Activated CD8-positive, alpha-beta T cell treated with anti-CD3 and anti-CD28 coated beads for 36 hours (primary cell): ENCODE measurements at regions of chr12 and their contacts with region 1.

Region 1: GRCh38 chr12:31274520-31275300 is 51.2 kb downstream of the SINHCAF start:
- DNase-seq: no peak
- ATAC-seq: no peak
- H3K4me3 Mint-ChIP-seq: no peak overlapping the region
- H3K27ac Mint-ChIP-seq: peak overlapping the region; percentile 61
- H3K4me1 Mint-ChIP-seq: peaks cover 2% of the 10 kb centered on the region
- H3K27me3 Mint-ChIP-seq: no peaks in the 10 kb centered on the region
- CTCF ChIP-seq: no peak

Region 2: DNA sequence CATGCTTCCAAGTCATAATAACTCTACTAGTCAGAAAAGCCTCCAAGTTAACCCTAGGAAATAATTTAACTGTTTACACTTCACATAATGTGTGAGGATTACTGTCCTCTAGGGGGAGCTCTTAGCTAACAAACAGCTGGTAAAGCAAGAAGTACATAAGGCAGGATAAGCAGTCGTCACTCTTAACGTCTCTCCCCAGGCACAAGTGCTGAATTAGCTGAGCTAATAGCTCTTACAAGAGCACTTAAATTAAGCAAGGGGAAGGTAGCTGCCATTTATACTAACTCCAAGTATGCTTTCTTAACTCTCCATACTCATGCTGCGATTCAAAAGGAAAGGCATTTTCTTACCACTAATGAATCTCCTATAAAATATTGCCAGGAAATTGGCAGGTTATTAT is 427.5 kb before region 1 on chr12:
- CTCF ChIA-PET with region 1: interaction called, 27 read pairs
- POLR2A ChIA-PET with region 1: no interaction called
- intact Hi-C with region 1: no loop called
- DNase-seq: peak; percentile 33
- ATAC-seq: no peak
- H3K4me3 Mint-ChIP-seq: no peak overlapping the region
- H3K27ac Mint-ChIP-seq: no peak overlapping the region
- H3K4me1 Mint-ChIP-seq: peaks cover 10% of the 10 kb centered on the region
- H3K27me3 Mint-ChIP-seq: no peaks in the 10 kb centered on the region
- CTCF ChIP-seq: peak; percentile 81

Region 3: DNA sequence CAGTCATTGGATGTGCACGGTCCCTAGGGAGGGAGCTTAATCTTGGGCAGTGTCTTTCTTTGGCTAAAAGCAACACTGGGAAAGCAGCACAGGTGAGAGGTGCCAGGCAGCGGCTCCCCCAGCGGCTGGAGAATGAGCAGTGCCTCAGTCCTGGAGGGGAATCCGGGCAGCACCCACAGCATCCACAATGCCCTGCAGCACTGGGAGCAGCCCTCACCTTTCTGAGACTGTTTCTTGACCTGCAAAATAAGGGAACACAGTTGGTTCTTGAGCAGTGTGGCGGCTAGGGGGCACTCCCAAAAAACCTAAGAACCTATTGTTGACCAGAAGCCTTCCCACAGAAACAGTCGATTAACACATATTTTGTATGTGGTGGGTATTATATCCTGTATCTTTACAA is 24.5 kb before region 1 on chr12:
- CTCF ChIA-PET with region 1: interaction called, 40 read pairs
- POLR2A ChIA-PET with region 1: no interaction called
- intact Hi-C with region 1: no loop called
- DNase-seq: no peak
- ATAC-seq: no peak
- H3K4me3 Mint-ChIP-seq: no peak overlapping the region
- H3K27ac Mint-ChIP-seq: no peak overlapping the region
- H3K4me1 Mint-ChIP-seq: no peaks in the 10 kb centered on the region
- H3K27me3 Mint-ChIP-seq: peaks cover 3% of the 10 kb centered on the region
- CTCF ChIP-seq: no peak

Region 4: GRCh38 chr12:31259136-31259886 is 15.4 kb before region 1 on chr12:
- CTCF ChIA-PET with region 1: interaction called, 56 read pairs
- POLR2A ChIA-PET with region 1: interaction called, 3 read pairs
- intact Hi-C with region 1: no loop called
- DNase-seq: no peak
- ATAC-seq: no peak
- H3K4me3 Mint-ChIP-seq: no peak overlapping the region
- H3K27ac Mint-ChIP-seq: no peak overlapping the region
- H3K4me1 Mint-ChIP-seq: no peaks in the 10 kb centered on the region
- H3K27me3 Mint-ChIP-seq: no peaks in the 10 kb centered on the region
- CTCF ChIP-seq: no peak

Region 5: DNA sequence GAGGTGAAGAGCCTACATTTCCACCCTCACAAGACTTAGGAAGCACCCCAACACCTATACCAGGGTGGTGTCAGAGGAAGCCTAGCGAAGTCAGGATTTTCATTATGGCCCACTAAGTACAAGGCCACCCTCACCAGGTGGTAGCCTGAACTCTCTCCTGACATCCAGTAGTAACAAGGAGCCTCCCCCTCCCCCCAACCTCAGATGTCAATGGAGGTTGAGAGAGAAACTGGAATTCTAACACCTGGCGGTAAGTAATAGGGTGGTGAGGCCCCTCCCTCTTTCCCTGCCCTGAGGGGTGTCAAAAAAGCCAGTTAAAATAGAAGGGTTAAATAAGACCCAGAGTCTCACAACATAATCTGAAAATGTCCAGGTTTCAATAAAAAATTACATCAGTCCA is 13.7 kb after region 1 on chr12:
- CTCF ChIA-PET with region 1: interaction called, 23 read pairs
- POLR2A ChIA-PET with region 1: no interaction called
- intact Hi-C with region 1: no loop called
- DNase-seq: no peak
- ATAC-seq: no peak
- H3K4me3 Mint-ChIP-seq: no peak overlapping the region
- H3K27ac Mint-ChIP-seq: peak overlapping the region; percentile 63
- H3K4me1 Mint-ChIP-seq: peaks cover 7% of the 10 kb centered on the region
- H3K27me3 Mint-ChIP-seq: no peaks in the 10 kb centered on the region
- CTCF ChIP-seq: no peak

Region 6: GRCh38 chr12:31297572-31298512 is 23.1 kb after region 1 on chr12:
- CTCF ChIA-PET with region 1: interaction called, 33 read pairs
- POLR2A ChIA-PET with region 1: interaction called, 3 read pairs
- intact Hi-C with region 1: no loop called
- DNase-seq: no peak
- ATAC-seq: no peak
- H3K4me3 Mint-ChIP-seq: no peak overlapping the region
- H3K27ac Mint-ChIP-seq: peak overlapping the region; percentile 61
- H3K4me1 Mint-ChIP-seq: peaks cover 39% of the 10 kb centered on the region
- H3K27me3 Mint-ChIP-seq: no peaks in the 10 kb centered on the region
- CTCF ChIP-seq: no peak

Region 7: GRCh38 chr12:31317471-31318395 is 43.0 kb after region 1 on chr12:
- CTCF ChIA-PET with region 1: interaction called, 18 read pairs
- POLR2A ChIA-PET with region 1: no interaction called
- intact Hi-C with region 1: no loop called
- DNase-seq: no peak
- ATAC-seq: peak; percentile 14
- H3K4me3 Mint-ChIP-seq: peak overlapping the region; percentile 100
- H3K27ac Mint-ChIP-seq: peak overlapping the region; percentile 99
- H3K4me1 Mint-ChIP-seq: peaks cover 76% of the 10 kb centered on the region
- H3K27me3 Mint-ChIP-seq: no peaks in the 10 kb centered on the region
- CTCF ChIP-seq: no peak

Region 8: GRCh38 chr12:31524791-31525495 is 250.2 kb after region 1 on chr12:
- CTCF ChIA-PET with region 1: no interaction called
- POLR2A ChIA-PET with region 1: no interaction called
- intact Hi-C with region 1: no loop called
- DNase-seq: no peak
- ATAC-seq: no peak
- H3K4me3 Mint-ChIP-seq: no peak overlapping the region
- H3K27ac Mint-ChIP-seq: no peak overlapping the region
- H3K4me1 Mint-ChIP-seq: no peaks in the 10 kb centered on the region
- H3K27me3 Mint-ChIP-seq: peaks cover 5% of the 10 kb centered on the region
- CTCF ChIP-seq: no peak